Vagina (tissue), 2 donors: ENCODE measurements at regions of chr12 and their contacts with region 1.

Region 1: GRCh38 chr12:25958428-25959070 is at the start of gene RASSF8:
- DNase-seq: no peak
- H3K4me3 ChIP-seq: peak within 1 kb of the TSS; percentile 74 to 85
- H3K27ac ChIP-seq: peak within 1 kb of the TSS; percentile 94
- H3K4me1 ChIP-seq: peaks cover 23% of the 10 kb centered on the region
- H3K27me3 ChIP-seq: no peaks in the 10 kb centered on the region
- CTCF ChIP-seq: no peak
- POLR2A ChIP-seq: peak in 1 of 2 donors; percentile 86
- total RNA-seq, gene RASSF8: 68.5 TPM

Region 2: DNA sequence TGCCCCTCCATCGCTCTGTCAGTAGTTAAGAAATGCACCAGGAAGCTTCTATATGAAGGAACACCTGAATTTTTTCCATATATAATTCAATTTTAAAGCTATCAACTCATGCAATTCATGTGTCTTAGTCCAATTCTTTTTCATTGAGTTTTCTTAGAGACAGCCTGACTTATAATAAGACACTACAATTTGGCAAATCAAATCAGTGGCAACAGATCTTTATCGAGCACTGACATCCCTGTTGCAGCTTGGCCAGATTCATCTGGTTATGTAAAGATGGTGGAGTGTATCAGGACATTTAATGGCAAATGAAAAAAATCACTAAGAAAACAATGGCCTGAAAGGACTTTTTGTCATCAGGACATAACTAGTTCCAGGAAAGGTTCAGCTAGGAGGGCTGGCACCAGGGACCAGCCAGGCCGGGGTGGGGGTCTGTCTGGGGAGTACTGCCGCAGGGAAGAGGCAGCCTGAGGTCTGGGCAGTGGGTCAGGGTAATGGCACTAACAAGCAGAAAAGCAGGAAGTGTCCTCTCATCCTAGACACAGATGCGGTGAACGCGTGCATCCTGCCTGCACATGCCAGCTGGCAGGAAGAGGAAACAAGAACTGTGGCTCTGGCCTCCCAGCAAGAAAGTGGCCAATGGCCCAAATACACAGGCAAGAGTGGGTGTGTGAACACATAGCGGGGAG is 304.9 kb before region 1 on chr12:
- intact Hi-C with region 1: no loop called
- DNase-seq: peak in 1 of 2 donors; percentile 83
- H3K4me3 ChIP-seq: no peak overlapping the region
- H3K27ac ChIP-seq: no peak overlapping the region
- H3K4me1 ChIP-seq: no peaks in the 10 kb centered on the region
- H3K27me3 ChIP-seq: no peaks in the 10 kb centered on the region
- CTCF ChIP-seq: no peak
- POLR2A ChIP-seq: no peak

Region 3: GRCh38 chr12:26017484-26018206 is 59.1 kb after region 1 on chr12:
- intact Hi-C with region 1: loop called (anchors 10 kb)
- DNase-seq: no peak
- H3K4me3 ChIP-seq: no peak overlapping the region
- H3K27ac ChIP-seq: no peak overlapping the region
- H3K4me1 ChIP-seq: peaks cover 16% of the 10 kb centered on the region
- H3K27me3 ChIP-seq: no peaks in the 10 kb centered on the region
- CTCF ChIP-seq: peak in 2 of 3 experiments; percentile 14 to 16
- POLR2A ChIP-seq: no peak

Region 4: GRCh38 chr12:26032719-26033241 is 74.2 kb after region 1 on chr12:
- intact Hi-C with region 1: loop called (anchors 5 kb)
- DNase-seq: no peak
- H3K4me3 ChIP-seq: no peak overlapping the region
- H3K27ac ChIP-seq: no peak overlapping the region
- H3K4me1 ChIP-seq: peaks cover 43% of the 10 kb centered on the region
- H3K27me3 ChIP-seq: no peaks in the 10 kb centered on the region
- CTCF ChIP-seq: no peak
- POLR2A ChIP-seq: no peak

Region 5: GRCh38 chr12:26068503-26068902 is 110.0 kb after region 1 on chr12:
- intact Hi-C with region 1: no loop called
- DNase-seq: no peak
- H3K4me3 ChIP-seq: no peak overlapping the region
- H3K27ac ChIP-seq: no peak overlapping the region
- H3K4me1 ChIP-seq: no peaks in the 10 kb centered on the region
- H3K27me3 ChIP-seq: no peaks in the 10 kb centered on the region
- CTCF ChIP-seq: no peak
- POLR2A ChIP-seq: no peak

Region 6: GRCh38 chr12:26760657-26761293 is 802.2 kb after region 1 on chr12:
- intact Hi-C with region 1: no loop called
- DNase-seq: no peak
- H3K4me3 ChIP-seq: no peak overlapping the region
- H3K27ac ChIP-seq: no peak overlapping the region
- H3K4me1 ChIP-seq: no peaks in the 10 kb centered on the region
- H3K27me3 ChIP-seq: no peaks in the 10 kb centered on the region
- CTCF ChIP-seq: no peak
- POLR2A ChIP-seq: no peak